ENCODE measurements at regions of chr9 and their contacts with region 1.

Region 1: GRCh38 chr9:122100756-122101155 is 7.6 kb upstream of the TTLL11 start:
- DNase-seq: no peak
- H3K4me3 ChIP-seq: no peak overlapping the region
- H3K27ac ChIP-seq: no peak overlapping the region
- H3K4me1 ChIP-seq: no peaks in the 10 kb centered on the region
- H3K27me3 ChIP-seq: no peaks in the 10 kb centered on the region
- CTCF ChIP-seq: no peak
- POLR2A ChIP-seq: no peak

Region 2: GRCh38 chr9:122356627-122357026 is 255.9 kb after region 1 on chr9:
- intact Hi-C with region 1: loop called (anchors 5 kb)
- DNase-seq: no peak
- H3K4me3 ChIP-seq: no peak overlapping the region
- H3K27ac ChIP-seq: no peak overlapping the region
- H3K4me1 ChIP-seq: no peaks in the 10 kb centered on the region
- H3K27me3 ChIP-seq: no peaks in the 10 kb centered on the region
- CTCF ChIP-seq: no peak
- POLR2A ChIP-seq: no peak